ENCODE measurements at regions of chr19 and their contacts with region 1.

Region 1: DNA sequence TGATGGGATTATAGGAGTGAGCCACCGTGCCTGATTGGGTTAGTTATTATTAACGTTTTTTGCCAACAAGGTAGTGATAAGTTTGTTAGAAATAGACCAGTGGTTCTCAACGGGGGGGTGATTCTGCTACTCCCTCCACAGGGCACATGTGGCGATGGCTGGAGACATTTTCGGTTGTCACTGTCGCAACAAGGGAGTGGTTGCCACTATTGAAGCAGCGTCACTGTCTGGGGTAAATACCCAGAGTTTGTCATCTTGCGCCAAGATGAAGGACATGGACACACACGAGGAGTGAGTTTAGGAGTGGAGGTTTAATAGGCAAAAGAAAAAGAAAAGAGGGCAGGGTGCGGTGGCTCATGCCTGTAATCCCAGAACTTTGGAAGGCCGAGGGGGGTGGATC is 18.9 kb downstream of the ADGRE3 start:
- DNase-seq: no peak
- H3K4me3 ChIP-seq: no peak overlapping the region
- H3K27ac ChIP-seq: no peak overlapping the region
- H3K4me1 ChIP-seq: no peaks in the 10 kb centered on the region
- H3K27me3 ChIP-seq: no peaks in the 10 kb centered on the region
- CTCF ChIP-seq: no peak
- EP300 ChIP-seq: no peak
- POLR2A ChIP-seq: no peak

Region 2: GRCh38 chr19:14603990-14604387 is 51.7 kb before region 1 on chr19:
- intact Hi-C with region 1: loop called in 1 of 4 experiments (anchors 10 kb)
- DNase-seq: no peak
- H3K4me3 ChIP-seq: no peak overlapping the region
- H3K27ac ChIP-seq: no peak overlapping the region
- H3K4me1 ChIP-seq: no peaks in the 10 kb centered on the region
- H3K27me3 ChIP-seq: no peaks in the 10 kb centered on the region
- CTCF ChIP-seq: no peak
- EP300 ChIP-seq: no peak
- POLR2A ChIP-seq: no peak

Region 3: GRCh38 chr19:14933506-14933905 is 277.8 kb after region 1 on chr19:
- intact Hi-C with region 1: no loop called
- DNase-seq: no peak
- H3K4me3 ChIP-seq: no peak overlapping the region
- H3K27ac ChIP-seq: no peak overlapping the region
- H3K4me1 ChIP-seq: no peaks in the 10 kb centered on the region
- H3K27me3 ChIP-seq: no peaks in the 10 kb centered on the region
- CTCF ChIP-seq: no peak
- EP300 ChIP-seq: no peak
- POLR2A ChIP-seq: no peak

Measured in ovary (tissue), 10 donors.